GM10248 (cell line): ENCODE measurements at regions of chr15 and their contacts with region 1.

Region 1: GRCh38 chr15:59501597-59501996 is 63.6 kb downstream of the FAM81A start:
- DNase-seq: peak; percentile 72
- CTCF ChIP-seq: peak; percentile 61

Region 2: DNA sequence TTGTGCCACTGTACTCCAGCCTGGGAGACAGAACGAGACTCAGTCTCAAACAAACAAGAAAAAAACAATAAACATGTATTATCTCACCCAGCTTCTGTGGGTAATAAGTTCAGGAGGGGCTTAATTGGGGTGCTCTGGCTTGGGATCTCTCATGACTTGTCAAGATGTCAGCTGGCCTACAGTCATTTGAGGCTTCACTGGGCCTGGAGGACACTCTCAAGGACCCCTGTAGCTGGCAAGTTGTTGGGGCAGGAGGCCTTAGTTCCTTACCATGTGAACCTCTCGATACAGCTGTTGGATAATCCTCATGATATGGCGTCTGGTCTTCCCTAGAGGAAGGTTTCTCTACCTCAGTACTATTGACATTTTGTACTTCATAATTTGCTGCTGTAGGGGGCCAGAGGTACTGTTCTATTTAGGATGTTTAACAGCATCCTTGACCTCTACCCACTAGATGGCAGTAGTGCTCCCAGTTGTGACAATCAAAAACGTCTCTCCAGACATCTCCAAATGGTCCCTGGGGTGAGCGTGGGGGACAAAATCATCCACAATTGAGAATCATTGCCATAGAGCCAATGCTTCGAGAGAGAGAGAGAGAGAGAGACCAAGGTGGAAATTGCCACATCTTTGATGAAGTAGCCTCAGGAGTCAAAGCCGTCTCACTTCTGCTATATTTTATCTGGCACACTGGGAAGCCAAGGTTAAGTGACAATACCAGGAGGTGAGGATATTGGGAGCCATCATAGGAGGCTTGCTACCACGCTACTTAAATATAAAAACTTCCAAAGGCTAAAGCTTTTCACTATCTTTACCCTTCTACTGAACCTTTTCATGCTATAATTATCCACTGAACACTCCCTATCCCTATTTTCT is 544.3 kb before region 1 on chr15:
- CTCF ChIA-PET with region 1: interaction called, 12 read pairs
- POLR2A ChIA-PET with region 1: no interaction called
- DNase-seq: peak; percentile 59
- CTCF ChIP-seq: peak; percentile 35

Region 3: GRCh38 chr15:58980351-58980939 is 521.2 kb before region 1 on chr15:
- CTCF ChIA-PET with region 1: interaction called, 11 read pairs
- POLR2A ChIA-PET with region 1: no interaction called
- DNase-seq: peak; percentile 25
- CTCF ChIP-seq: peak; percentile 44

Region 4: GRCh38 chr15:59539799-59540198 is 38.2 kb after region 1 on chr15:
- CTCF ChIA-PET with region 1: no interaction called
- POLR2A ChIA-PET with region 1: no interaction called
- DNase-seq: no peak
- CTCF ChIP-seq: no peak